A673 (cell line): ENCODE measurements at regions of chr4 and their contacts with region 1.

Region 1: GRCh38 chr4:137124278-137124932 is 407.9 kb downstream of the PCDH18 start:
- DNase-seq: peak; percentile 78
- H3K4me3 ChIP-seq: peak overlapping the region; percentile 48
- H3K27ac ChIP-seq: no peak overlapping the region
- H3K4me1 ChIP-seq: peaks cover 8% of the 10 kb centered on the region
- H3K27me3 ChIP-seq: no peaks in the 10 kb centered on the region
- CTCF ChIP-seq: peak; percentile 80

Region 2: DNA sequence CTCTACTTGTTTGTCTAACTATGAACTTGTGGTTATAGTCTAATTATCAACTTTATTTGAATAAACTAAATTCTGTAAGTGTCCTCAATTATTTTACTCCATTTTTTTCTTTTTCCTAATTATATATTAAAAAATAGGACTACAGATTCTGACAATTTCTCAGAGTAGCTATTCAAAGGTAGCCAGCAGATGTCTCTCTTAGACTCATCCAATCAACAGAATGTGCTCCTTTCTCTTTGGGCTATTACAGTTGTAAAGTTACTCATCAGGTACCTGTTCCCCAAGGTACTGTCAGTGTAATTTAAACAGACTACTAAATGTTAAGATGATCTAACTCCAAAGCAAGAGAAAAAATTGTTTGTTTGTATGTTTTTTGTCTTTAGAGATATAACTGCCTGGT is 159.3 kb after region 1 on chr4:
- CTCF ChIA-PET with region 1: no interaction called
- POLR2A ChIA-PET with region 1: no interaction called
- intact Hi-C with region 1: loop called (anchors 10 kb)
- DNase-seq: no peak
- H3K4me3 ChIP-seq: no peak overlapping the region
- H3K27ac ChIP-seq: no peak overlapping the region
- H3K4me1 ChIP-seq: no peaks in the 10 kb centered on the region
- H3K27me3 ChIP-seq: no peaks in the 10 kb centered on the region
- CTCF ChIP-seq: peak; percentile 49; the same call in 1 of the 2 replicates

Region 3: DNA sequence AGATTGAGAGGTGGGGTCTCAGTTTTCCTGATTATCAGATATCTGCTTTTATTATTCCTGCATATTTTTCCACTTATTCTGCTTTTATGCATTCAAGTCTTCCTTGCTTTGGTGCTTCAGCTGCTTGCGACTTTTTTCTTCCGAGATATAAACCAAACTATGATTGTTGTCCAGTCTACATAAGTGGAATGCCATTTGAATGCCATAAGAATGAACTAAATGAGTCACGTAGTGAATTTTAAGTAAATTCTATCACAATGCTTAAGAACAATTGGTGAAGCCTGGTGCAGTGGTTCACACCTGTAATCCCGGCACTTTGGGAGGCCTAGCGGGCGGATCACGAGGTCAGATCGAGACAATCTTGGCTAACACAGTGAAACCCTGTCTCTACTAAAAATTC is 218.8 kb after region 1 on chr4:
- CTCF ChIA-PET with region 1: no interaction called
- POLR2A ChIA-PET with region 1: no interaction called
- intact Hi-C with region 1: no loop called
- DNase-seq: no peak
- H3K4me3 ChIP-seq: no peak overlapping the region
- H3K27ac ChIP-seq: no peak overlapping the region
- H3K4me1 ChIP-seq: no peaks in the 10 kb centered on the region
- H3K27me3 ChIP-seq: no peaks in the 10 kb centered on the region
- CTCF ChIP-seq: no peak

Region 4: DNA sequence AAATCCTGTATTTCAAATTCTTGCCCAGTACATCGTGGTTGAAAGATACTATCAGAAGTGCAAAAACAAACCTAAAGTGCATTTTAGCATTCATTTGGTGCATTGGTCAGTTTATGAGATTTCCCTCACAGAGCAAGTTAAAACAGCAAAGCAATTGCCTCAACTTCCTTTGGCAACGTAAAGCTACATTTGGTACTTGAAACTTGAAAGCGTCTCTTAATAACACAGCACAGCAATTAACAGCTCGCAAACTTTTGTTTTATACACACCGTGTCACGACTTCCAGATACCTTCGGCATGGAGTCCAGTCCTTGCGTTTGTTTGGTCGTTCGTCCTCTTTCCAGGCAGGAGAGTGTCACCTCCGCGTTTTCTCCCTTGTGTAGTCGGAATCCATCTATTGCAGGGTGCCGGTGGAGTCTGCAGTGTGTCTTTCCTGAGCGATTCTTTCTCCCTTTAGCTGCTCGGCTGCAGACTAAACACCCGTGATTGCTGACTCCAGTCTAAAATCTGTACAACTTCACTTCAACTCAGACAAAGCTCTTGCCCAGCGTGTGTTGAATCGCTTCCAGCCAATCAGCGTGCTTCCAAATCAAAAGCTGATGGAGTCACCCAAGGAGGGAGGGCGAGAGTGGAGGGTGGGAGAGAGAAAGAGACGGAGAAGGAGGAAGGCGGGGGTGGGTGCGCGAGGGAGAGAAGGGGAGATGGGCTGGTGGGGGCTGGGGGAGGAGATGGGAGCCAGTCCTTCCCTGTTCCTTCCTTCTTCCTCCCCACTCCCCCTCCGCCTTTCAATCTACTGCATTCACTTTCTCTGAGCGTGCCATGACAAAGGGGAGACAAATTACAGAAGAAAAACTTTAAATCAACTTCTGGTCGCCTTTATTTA is 407.8 kb after region 1 on chr4 and contains the start of gene PCDH18:
- CTCF ChIA-PET with region 1: interaction called, 8 read pairs
- POLR2A ChIA-PET with region 1: no interaction called
- intact Hi-C with region 1: loop called (anchors 5 kb)
- DNase-seq: peak; percentile 97
- H3K4me3 ChIP-seq: peak within 1 kb of the TSS; percentile 62
- H3K27ac ChIP-seq: peak within 1 kb of the TSS; percentile 60
- H3K4me1 ChIP-seq: peaks cover 22% of the 10 kb centered on the region
- H3K27me3 ChIP-seq: no peaks in the 10 kb centered on the region
- CTCF ChIP-seq: no peak
- total RNA-seq, gene PCDH18: 7.8 and 10.0 TPM in 2 replicates

Region 5: DNA sequence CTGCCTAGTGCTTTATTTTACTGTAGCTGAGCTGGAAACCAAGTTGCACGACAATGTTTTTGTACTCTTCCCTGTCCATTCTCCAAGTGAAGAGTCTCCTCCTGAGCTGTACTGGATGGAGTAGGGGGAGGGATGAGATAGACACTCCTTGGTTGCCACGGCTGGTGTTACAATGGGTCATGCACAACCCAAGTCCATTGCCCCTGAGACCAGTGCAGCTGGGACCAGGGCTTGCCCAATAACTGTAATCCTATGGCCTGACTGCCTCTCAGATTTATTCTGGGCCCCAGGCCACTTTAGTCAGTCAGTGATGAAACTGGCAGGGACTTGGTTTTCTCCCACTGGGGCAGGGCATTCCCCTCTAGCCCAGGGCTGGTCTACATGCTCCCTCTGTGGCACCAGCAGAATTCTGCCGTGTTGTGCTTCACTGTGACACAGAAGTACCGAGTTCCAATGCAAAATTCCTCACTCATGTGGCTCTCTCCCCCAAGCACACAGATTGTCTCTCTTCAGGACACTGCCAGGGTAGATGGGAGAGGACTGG is 611.2 kb after region 1 on chr4:
- CTCF ChIA-PET with region 1: interaction called, 3 read pairs
- POLR2A ChIA-PET with region 1: no interaction called
- intact Hi-C with region 1: loop called (anchors 2 kb)
- DNase-seq: no peak
- H3K4me3 ChIP-seq: no peak overlapping the region
- H3K27ac ChIP-seq: no peak overlapping the region
- H3K4me1 ChIP-seq: no peaks in the 10 kb centered on the region
- H3K27me3 ChIP-seq: no peaks in the 10 kb centered on the region
- CTCF ChIP-seq: no peak

Region 6: DNA sequence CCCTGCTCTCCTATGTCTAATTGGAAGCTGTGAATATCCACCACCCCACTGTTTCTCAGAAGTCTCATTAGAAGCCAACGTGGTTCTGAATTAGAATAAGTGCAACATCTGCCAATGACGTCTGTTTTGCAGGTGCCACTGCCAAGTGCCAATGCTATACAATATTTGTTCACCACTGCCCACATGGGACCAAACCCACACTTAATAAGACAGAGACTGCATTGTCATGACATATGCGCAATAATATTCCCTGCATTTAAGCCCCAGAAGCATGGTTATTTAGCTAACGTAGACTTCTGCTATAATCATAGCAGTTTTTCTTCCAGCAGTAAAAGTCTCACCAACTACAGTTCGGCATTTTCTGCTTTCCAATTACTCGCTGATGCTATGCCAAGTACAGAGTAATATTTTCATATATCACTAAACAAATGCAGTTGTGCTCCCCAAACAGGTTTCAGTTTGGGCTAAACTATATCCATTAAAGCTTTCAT is 670.4 kb after region 1 on chr4:
- CTCF ChIA-PET with region 1: no interaction called
- POLR2A ChIA-PET with region 1: interaction called, 20 read pairs
- intact Hi-C with region 1: no loop called
- DNase-seq: no peak
- H3K4me3 ChIP-seq: no peak overlapping the region
- H3K27ac ChIP-seq: no peak overlapping the region
- H3K4me1 ChIP-seq: no peaks in the 10 kb centered on the region
- H3K27me3 ChIP-seq: no peaks in the 10 kb centered on the region
- CTCF ChIP-seq: no peak

Region 7: GRCh38 chr4:137861682-137862081 is 737.3 kb after region 1 on chr4:
- CTCF ChIA-PET with region 1: interaction called, 3 read pairs
- POLR2A ChIA-PET with region 1: no interaction called
- intact Hi-C with region 1: loop called (anchors 2 kb)
- DNase-seq: peak; percentile 6
- H3K4me3 ChIP-seq: no peak overlapping the region
- H3K27ac ChIP-seq: no peak overlapping the region
- H3K4me1 ChIP-seq: no peaks in the 10 kb centered on the region
- H3K27me3 ChIP-seq: no peaks in the 10 kb centered on the region
- CTCF ChIP-seq: peak; percentile 63

Region 8: GRCh38 chr4:138090150-138090917 is 965.9 kb after region 1 on chr4:
- CTCF ChIA-PET with region 1: interaction called, 3 read pairs
- POLR2A ChIA-PET with region 1: no interaction called
- intact Hi-C with region 1: loop called (anchors 10 kb)
- DNase-seq: peak; percentile 88
- H3K4me3 ChIP-seq: peak overlapping the region; percentile 38
- H3K27ac ChIP-seq: no peak overlapping the region
- H3K4me1 ChIP-seq: peaks cover 5% of the 10 kb centered on the region
- H3K27me3 ChIP-seq: no peaks in the 10 kb centered on the region
- CTCF ChIP-seq: peak; percentile 80